B cell (primary cell): ENCODE measurements at regions of chr6 and their contacts with region 1.

Region 1: GRCh38 chr6:53189554-53189953 is 40.9 kb upstream of the GCM1 start:
- DNase-seq: no peak
- ATAC-seq: no peak
- H3K4me3 ChIP-seq: no peak overlapping the region
- H3K4me3 Mint-ChIP-seq: no peak overlapping the region
- H3K27ac ChIP-seq: no peak overlapping the region
- H3K27ac Mint-ChIP-seq: no peak overlapping the region
- H3K4me1 ChIP-seq: peaks cover 50 to 51% of the 10 kb centered on the region in 2 donors
- H3K4me1 Mint-ChIP-seq: peaks cover 47% of the 10 kb centered on the region
- H3K27me3 ChIP-seq: no peaks in the 10 kb centered on the region
- H3K27me3 Mint-ChIP-seq: no peaks in the 10 kb centered on the region
- CTCF ChIP-seq: no peak

Region 2: GRCh38 chr6:53233309-53233708 is 43.8 kb after region 1 on chr6:
- CTCF ChIA-PET with region 1: interaction called, 10 read pairs
- POLR2A ChIA-PET with region 1: no interaction called
- intact Hi-C with region 1: no loop called
- DNase-seq: no peak
- ATAC-seq: no peak
- H3K4me3 ChIP-seq: no peak overlapping the region
- H3K4me3 Mint-ChIP-seq: no peak overlapping the region
- H3K27ac ChIP-seq: peak overlapping the region in 1 of 2 donors; percentile 1
- H3K27ac Mint-ChIP-seq: peak overlapping the region; percentile 47
- H3K4me1 ChIP-seq: peaks cover 69 to 74% of the 10 kb centered on the region in 2 donors
- H3K4me1 Mint-ChIP-seq: peaks cover 76% of the 10 kb centered on the region
- H3K27me3 ChIP-seq: no peaks in the 10 kb centered on the region
- H3K27me3 Mint-ChIP-seq: no peaks in the 10 kb centered on the region
- CTCF ChIP-seq: no peak

Region 3: DNA sequence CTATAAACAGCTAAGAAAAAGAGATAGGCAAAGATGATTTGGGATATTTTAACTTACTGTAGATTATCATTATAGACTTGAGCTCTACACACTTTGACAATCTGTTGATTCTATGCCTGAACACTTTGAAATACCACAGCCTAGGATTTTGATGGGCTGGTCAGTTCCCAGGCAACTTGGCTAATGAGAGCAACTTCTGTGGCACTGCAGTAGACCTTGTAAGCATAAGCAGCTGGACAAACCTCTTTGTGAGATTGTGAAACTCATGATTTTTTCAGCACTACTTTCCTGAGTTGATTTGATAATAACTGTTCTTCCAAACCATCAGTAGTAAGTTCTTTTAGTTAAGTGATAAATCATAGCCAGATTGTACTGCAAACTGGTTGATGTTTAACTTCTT is 186.3 kb after region 1 on chr6:
- CTCF ChIA-PET with region 1: no interaction called
- POLR2A ChIA-PET with region 1: no interaction called
- intact Hi-C with region 1: no loop called
- DNase-seq: no peak
- ATAC-seq: no peak
- H3K4me3 ChIP-seq: no peak overlapping the region
- H3K4me3 Mint-ChIP-seq: no peak overlapping the region
- H3K27ac ChIP-seq: no peak overlapping the region
- H3K27ac Mint-ChIP-seq: no peak overlapping the region
- H3K4me1 ChIP-seq: no peaks in the 10 kb centered on the region
- H3K4me1 Mint-ChIP-seq: no peaks in the 10 kb centered on the region
- H3K27me3 ChIP-seq: peaks cover 0 to 3% (median 0%) of the 10 kb centered on the region in 4 experiments
- H3K27me3 Mint-ChIP-seq: no peaks in the 10 kb centered on the region
- CTCF ChIP-seq: no peak